Kidney (tissue), 22 donors: ENCODE measurements at regions of chr4 and their contacts with region 1.

Region 1: GRCh38 chr4:86500527-86500926 is 93.6 kb upstream of the PTPN13 start:
- DNase-seq: no peak
- H3K4me3 ChIP-seq: no peak overlapping the region
- H3K27ac ChIP-seq: no peak overlapping the region
- H3K4me1 ChIP-seq: peaks cover 0 to 24% (median 13%) of the 10 kb centered on the region in 3 donors
- H3K27me3 ChIP-seq: no peaks in the 10 kb centered on the region
- CTCF ChIP-seq: no peak

Region 2: DNA sequence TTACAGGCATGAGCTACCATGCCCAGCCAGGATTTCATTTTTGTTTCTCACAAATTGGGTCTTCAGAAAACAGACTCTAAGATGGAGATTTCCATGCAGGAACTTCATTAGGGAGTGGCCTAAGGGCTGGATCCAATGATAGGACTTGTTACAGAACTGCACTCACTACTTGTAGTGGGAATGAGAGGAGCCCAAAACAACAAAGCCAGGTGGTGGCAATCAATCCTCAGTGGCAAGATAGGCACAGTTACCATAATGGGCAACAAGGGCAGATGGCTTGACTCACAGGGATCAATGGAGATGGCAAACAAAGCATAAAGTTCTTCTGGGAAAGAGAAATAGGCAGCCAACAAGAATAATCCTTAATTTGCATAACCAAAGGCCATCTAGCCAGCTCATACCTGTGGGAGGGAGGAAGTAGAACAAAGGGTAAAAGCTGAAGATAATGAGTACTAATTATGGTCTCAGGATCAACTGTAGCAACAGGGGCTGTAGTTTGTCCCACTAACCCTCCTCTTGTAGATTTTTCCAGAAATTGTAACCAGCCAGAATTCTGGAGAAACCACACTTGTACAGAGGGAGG is 67.9 kb before region 1 on chr4:
- intact Hi-C with region 1: no loop called
- DNase-seq: no peak
- H3K4me3 ChIP-seq: no peak overlapping the region
- H3K27ac ChIP-seq: no peak overlapping the region
- H3K4me1 ChIP-seq: no peaks in the 10 kb centered on the region
- H3K27me3 ChIP-seq: no peaks in the 10 kb centered on the region
- CTCF ChIP-seq: no peak

Region 3: DNA sequence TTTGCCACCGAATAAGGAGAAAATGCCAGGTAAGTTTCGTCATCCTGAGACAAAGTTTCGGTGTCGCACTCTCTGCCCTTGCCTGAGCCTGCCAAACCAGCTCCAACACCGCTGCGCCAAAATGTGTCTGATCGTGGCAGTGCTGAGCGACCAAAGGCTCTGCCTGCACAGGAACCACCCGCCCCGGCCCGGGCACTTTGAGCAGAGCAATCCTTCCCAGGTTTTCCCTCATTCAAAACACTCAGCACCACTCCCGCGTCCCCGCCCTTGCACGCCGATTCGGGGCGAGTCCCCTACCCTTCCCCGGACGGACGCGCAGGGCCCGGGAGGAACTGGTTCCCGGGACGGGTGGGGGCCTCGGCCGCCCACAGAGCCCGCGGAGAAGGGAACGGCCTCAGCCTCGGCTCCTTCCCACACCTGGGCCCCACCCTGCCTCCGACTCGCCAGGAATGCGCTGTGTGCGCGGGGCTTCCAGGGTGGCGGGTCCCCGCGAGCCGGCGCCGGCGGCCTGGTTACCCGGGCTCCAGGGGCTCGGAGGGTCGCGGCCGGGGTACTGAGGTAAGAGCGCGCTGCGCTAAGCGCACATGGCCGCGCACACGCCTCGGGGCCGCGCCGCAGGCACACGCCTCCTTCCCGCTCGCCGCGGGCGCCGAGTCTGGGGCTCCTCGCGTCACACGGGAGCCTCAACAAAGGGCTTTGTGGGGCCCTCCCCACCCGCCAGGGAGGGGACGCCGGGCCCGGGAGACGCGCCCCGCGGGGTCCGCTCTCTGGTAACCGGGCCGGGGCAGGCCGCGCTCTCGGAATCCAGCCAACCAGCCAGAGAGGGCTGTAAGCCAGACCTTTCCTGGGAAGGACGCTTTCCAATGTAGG is 391.5 kb after region 1 on chr4 and contains the start of gene C4orf36:
- intact Hi-C with region 1: loop called (anchors 5 kb)
- DNase-seq: peak; percentile 82 to 95 (median 88)
- H3K4me3 ChIP-seq: peak within 1 kb of the TSS; percentile 68 to 85 (median 75)
- H3K27ac ChIP-seq: peak within 1 kb of the TSS; percentile 57 to 85
- H3K4me1 ChIP-seq: peaks cover 0 to 2% (median 0%) of the 10 kb centered on the region in 3 donors
- H3K27me3 ChIP-seq: no peaks in the 10 kb centered on the region
- CTCF ChIP-seq: no peak
- total RNA-seq, gene C4orf36: 2.0 TPM